Psoas muscle (tissue), 8 donors: ENCODE measurements at regions of chr17 and their contacts with region 1.

Region 1: DNA sequence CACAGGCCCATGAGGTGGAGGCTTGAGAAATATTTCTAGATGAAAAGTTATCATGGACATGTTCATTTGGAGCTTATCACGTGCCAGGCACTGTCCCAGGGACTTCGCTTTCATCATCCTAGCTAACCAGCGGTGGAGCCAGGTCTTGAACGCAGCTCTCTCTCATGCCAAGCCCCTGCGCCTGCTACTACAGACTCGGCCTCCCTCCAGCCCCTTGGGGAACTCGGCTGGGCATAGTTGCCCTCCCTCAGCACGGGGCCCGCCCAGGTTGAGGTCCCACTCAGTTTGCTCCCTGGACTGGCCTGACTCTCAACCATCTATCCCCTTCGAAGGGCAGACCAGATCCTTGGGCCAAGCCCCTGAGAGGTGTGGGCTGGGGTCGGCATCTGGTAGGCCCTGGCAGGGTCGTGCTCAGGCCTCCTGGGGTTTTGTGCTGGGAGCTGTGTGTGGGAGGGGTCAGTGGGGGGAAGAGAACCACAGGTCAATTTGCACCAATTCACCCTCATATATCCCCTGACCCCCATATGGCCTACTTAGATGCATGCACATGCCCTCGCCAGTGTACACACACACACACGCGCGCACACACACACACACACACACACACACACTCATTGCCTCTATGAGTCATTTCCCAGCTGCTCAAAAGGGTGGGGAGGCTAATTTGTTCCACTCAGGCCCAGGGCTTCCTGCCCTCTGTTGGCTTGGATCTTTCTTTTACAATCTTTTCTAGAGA is 12.1 kb upstream of the SCN4A start:
- DNase-seq: peak; percentile 63 to 87
- ATAC-seq: peak; percentile 60 to 68 (median 64)
- H3K4me3 ChIP-seq: peak overlapping the region; percentile 66
- H3K27ac ChIP-seq: peak overlapping the region; percentile 93
- H3K4me1 ChIP-seq: peaks cover 75% of the 10 kb centered on the region
- H3K27me3 ChIP-seq: no peaks in the 10 kb centered on the region
- CTCF ChIP-seq: no peak

Region 2: GRCh38 chr17:63904316-63904715 is 80.5 kb before region 1 on chr17:
- intact Hi-C with region 1: no loop called
- DNase-seq: no peak
- ATAC-seq: no peak
- H3K4me3 ChIP-seq: no peak overlapping the region
- H3K27ac ChIP-seq: no peak overlapping the region
- H3K4me1 ChIP-seq: no peaks in the 10 kb centered on the region
- H3K27me3 ChIP-seq: no peaks in the 10 kb centered on the region
- CTCF ChIP-seq: no peak

Region 3: DNA sequence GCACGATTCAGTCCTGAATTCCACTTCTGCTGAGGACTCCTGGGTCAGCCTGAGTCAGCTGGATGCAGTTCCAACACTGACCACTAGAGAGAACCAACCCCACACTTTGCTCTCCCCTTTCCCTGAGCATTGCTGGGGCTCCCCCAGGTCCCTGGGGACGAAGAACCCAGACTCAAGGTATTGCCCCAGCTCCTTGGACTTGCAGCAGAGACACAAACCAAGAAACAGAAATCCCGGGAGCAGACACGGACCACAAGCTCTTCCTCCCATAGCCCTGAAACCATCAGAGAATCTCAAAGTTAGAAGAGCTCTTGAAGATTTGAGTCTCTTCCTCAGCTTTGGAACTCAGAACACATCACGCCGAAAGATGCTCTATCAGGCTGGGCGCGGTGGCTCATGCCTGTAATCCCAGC is 65.5 kb before region 1 on chr17:
- intact Hi-C with region 1: loop called (anchors 2 kb)
- DNase-seq: peak; percentile 47 to 65
- ATAC-seq: peak; percentile 87 to 97 (median 92)
- H3K4me3 ChIP-seq: no peak overlapping the region
- H3K27ac ChIP-seq: no peak overlapping the region
- H3K4me1 ChIP-seq: no peaks in the 10 kb centered on the region
- H3K27me3 ChIP-seq: no peaks in the 10 kb centered on the region
- CTCF ChIP-seq: peak; percentile 95

Region 4: DNA sequence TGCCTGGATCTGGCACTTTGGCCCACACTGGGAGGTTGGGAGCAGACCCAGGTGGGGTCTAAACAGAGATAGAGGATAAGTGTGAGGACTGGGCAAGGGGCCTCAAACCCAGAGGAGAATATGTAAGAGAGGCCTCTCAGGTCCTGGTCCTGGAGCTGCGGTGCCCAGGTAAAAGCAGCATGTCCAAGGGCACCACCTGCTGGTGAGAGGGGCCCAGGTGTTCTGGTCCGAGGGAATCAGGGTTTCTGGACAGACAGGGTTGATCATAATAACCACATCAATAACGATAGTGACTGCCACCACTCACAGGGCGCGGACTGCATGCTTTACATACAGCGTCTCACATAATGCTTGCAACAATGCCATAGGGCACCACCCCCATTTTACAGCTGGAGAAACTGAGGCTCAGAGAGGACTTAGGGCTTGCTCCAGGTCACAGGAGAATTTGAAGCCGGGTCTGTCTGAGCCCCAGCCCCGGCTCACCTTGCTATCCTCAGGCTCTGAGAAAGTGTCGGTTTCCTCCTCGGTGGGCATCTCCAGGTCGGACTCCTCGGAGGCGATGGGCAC is 33.8 kb before region 1 on chr17:
- intact Hi-C with region 1: loop called (anchors 2 to 5 kb)
- DNase-seq: no peak
- ATAC-seq: no peak
- H3K4me3 ChIP-seq: no peak overlapping the region
- H3K27ac ChIP-seq: peak overlapping the region; percentile 77
- H3K4me1 ChIP-seq: peaks cover 58% of the 10 kb centered on the region
- H3K27me3 ChIP-seq: no peaks in the 10 kb centered on the region
- CTCF ChIP-seq: peak; percentile 47